PC-3 (cell line): ENCODE measurements at regions of chr19 and their contacts with region 1.

Region 1: GRCh38 chr19:46717034-46717723 is at the start of gene PRKD2:
- DNase-seq: peak; percentile 69
- ATAC-seq: peak; percentile 66
- H3K4me3 ChIP-seq: peak within 1 kb of the TSS; percentile 93
- H3K27ac ChIP-seq: no peak within 1 kb of the TSS
- H3K4me1 ChIP-seq: no peaks in the 10 kb centered on the region; the same call in 1 of the 2 replicates
- H3K27me3 ChIP-seq: no peaks in the 10 kb centered on the region
- CTCF ChIP-seq: no peak
- total RNA-seq, gene PRKD2: 24.1 and 32.9 TPM in 2 replicates

Region 2: DNA sequence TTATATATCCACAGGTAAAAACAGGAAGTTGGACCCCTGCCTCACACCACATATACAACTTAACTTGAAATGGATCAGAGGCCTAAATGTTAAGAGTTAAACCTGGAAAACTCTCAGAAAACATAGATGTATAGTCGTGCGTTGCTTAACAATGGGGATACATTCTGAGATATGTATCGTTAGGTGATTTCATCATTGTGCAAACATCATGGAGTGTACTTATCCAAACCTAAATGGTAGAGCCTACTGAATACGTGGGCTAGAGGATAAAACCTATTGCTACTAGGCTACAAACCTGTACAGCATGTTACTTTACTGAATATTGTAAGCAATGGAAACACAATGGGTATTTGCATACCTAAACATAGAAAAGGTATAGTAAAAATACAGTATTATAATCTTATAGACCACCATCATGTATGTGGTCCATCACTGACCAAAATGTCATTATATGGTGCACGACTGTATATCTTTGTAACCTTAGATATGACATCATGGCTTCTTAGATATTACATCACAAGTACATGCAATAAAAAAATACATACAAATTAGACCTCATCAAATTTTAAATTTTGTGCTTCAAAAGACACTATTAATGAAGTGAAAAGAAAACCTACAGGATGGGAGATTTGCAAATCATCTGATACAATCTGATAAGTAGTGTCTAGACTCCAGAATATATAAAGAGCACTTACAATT is 130.7 kb before region 1 on chr19:
- CTCF ChIA-PET with region 1: no interaction called
- POLR2A ChIA-PET with region 1: no interaction called
- intact Hi-C with region 1: no loop called
- DNase-seq: no peak
- ATAC-seq: no peak
- H3K4me3 ChIP-seq: no peak overlapping the region
- H3K27ac ChIP-seq: no peak overlapping the region
- H3K4me1 ChIP-seq: no peaks in the 10 kb centered on the region
- H3K27me3 ChIP-seq: no peaks in the 10 kb centered on the region
- CTCF ChIP-seq: no peak

Region 3: GRCh38 chr19:46674416-46675183 is 42.6 kb before region 1 on chr19:
- CTCF ChIA-PET with region 1: no interaction called
- POLR2A ChIA-PET with region 1: no interaction called
- intact Hi-C with region 1: no loop called
- DNase-seq: peak; percentile 37
- ATAC-seq: peak; percentile 38; the same call in 1 of the 2 replicates
- H3K4me3 ChIP-seq: no peak overlapping the region
- H3K27ac ChIP-seq: no peak overlapping the region
- H3K4me1 ChIP-seq: no peaks in the 10 kb centered on the region
- H3K27me3 ChIP-seq: no peaks in the 10 kb centered on the region
- CTCF ChIP-seq: no peak

Region 4: DNA sequence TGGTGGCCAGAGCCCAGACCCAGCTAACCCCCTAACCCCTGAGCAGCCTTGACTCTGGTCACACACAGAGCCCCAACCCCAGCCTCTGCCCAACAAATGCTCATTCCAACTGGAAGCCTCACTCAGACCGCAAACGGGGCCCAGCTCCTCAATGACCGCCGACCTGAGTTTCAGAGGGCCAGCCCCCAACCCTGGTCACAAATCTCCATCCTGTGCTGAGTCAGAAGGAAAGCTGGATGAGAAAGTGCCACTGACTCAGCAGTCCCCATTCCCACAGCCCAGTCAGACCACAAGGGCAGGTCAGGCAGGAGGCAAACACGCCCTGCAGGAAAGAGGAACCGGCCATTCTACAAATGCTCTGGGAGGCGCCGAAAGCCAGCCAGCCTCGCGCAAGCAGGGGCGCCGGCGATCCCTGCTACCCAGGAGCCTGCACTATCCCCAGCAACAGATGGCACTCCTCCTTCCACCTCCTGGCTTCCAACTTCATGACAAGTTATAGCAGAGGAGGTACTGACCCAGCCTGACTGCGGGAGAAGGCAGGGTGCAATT is 13.8 kb after region 1 on chr19:
- CTCF ChIA-PET with region 1: interaction called, 6 read pairs
- POLR2A ChIA-PET with region 1: interaction called, 4 read pairs
- intact Hi-C with region 1: loop called (anchors 2 kb)
- DNase-seq: peak; percentile 89
- ATAC-seq: peak; percentile 85
- H3K4me3 ChIP-seq: peak overlapping the region; percentile 30; the same call in 1 of the 2 replicates
- H3K27ac ChIP-seq: peak overlapping the region; percentile 91
- H3K4me1 ChIP-seq: peaks cover 43% of the 10 kb centered on the region
- H3K27me3 ChIP-seq: no peaks in the 10 kb centered on the region
- CTCF ChIP-seq: no peak